IMR-90 (cell line): ENCODE measurements at regions of chr1 and their contacts with region 1.

Region 1: GRCh38 chr1:39954816-39955546 is at the start of gene MFSD2A:
- DNase-seq: peak; percentile 89
- ATAC-seq: peak; percentile 97
- H3K4me3 ChIP-seq: peak within 1 kb of the TSS; percentile 54
- H3K27ac ChIP-seq: no peak within 1 kb of the TSS; the same call in 1 of the 2 replicates
- H3K4me1 ChIP-seq: peaks cover 9% of the 10 kb centered on the region
- H3K27me3 ChIP-seq: peaks cover 2% of the 10 kb centered on the region; the same call in 1 of the 2 replicates
- CTCF ChIP-seq: no peak
- POLR2A ChIP-seq: peak; percentile 87
- RAD21 ChIP-seq: no peak; the same call in 1 of the 2 replicates
- total RNA-seq, gene MFSD2A: 5.0 and 5.7 TPM in 2 replicates

Region 2: DNA sequence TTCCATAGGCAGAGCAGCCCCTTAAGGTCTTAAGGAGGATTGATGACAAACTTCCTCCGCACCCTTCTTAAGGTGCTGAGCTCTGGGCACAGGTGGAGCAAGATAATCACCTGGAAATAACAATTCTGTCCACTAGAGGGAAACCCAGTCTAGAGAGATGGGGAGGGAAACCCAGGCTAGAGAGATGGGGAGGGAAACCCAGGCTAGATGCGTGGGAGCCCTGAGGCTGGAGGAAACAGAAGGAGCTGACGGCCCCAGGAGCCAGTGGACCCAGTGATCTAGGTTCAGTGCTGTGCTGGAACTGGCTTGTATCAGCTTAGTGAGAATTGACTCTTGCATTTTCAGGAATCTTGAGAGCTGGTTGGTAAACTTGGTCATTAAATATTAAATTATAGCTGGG is 35.4 kb before region 1 on chr1:
- CTCF ChIA-PET with region 1: interaction called, 3 read pairs
- POLR2A ChIA-PET with region 1: interaction called, 3 read pairs
- dilution Hi-C with region 1: no loop called
- in situ Hi-C with region 1: no loop called
- intact Hi-C with region 1: loop called (anchors 5 kb)
- DNase-seq: peak; percentile 58
- ATAC-seq: peak; percentile 89
- H3K4me3 ChIP-seq: no peak overlapping the region
- H3K27ac ChIP-seq: no peak overlapping the region
- H3K4me1 ChIP-seq: no peaks in the 10 kb centered on the region
- H3K27me3 ChIP-seq: peaks cover 15% of the 10 kb centered on the region
- CTCF ChIP-seq: peak; percentile 76
- POLR2A ChIP-seq: no peak
- RAD21 ChIP-seq: peak; percentile 78